IMR-90 (cell line): ENCODE measurements at regions of chr9 and their contacts with region 1.

Region 1: GRCh38 chr9:6479959-6480358 is 67.0 kb downstream of the UHRF2 start:
- DNase-seq: no peak
- ATAC-seq: no peak
- H3K4me3 ChIP-seq: no peak overlapping the region
- H3K27ac ChIP-seq: no peak overlapping the region
- H3K4me1 ChIP-seq: no peaks in the 10 kb centered on the region
- H3K27me3 ChIP-seq: no peaks in the 10 kb centered on the region
- CTCF ChIP-seq: no peak
- POLR2A ChIP-seq: no peak
- RAD21 ChIP-seq: no peak

Region 2: GRCh38 chr9:6441269-6441668 is 38.7 kb before region 1 on chr9:
- CTCF ChIA-PET with region 1: no interaction called
- POLR2A ChIA-PET with region 1: no interaction called
- dilution Hi-C with region 1: no loop called
- in situ Hi-C with region 1: no loop called
- intact Hi-C with region 1: loop called (anchors 1 kb)
- DNase-seq: peak; percentile 27
- ATAC-seq: 0 out of 2 replicates have a peak, but pooled peaks have one; percentile 24
- H3K4me3 ChIP-seq: no peak overlapping the region
- H3K27ac ChIP-seq: no peak overlapping the region
- H3K4me1 ChIP-seq: peaks cover 3% of the 10 kb centered on the region; the same call in 1 of the 2 replicates
- H3K27me3 ChIP-seq: no peaks in the 10 kb centered on the region
- CTCF ChIP-seq: no peak
- POLR2A ChIP-seq: no peak
- RAD21 ChIP-seq: no peak